Endothelial cell of umbilical vein (primary cell): ENCODE measurements at regions of chr9 and their contacts with region 1.

Region 1: DNA sequence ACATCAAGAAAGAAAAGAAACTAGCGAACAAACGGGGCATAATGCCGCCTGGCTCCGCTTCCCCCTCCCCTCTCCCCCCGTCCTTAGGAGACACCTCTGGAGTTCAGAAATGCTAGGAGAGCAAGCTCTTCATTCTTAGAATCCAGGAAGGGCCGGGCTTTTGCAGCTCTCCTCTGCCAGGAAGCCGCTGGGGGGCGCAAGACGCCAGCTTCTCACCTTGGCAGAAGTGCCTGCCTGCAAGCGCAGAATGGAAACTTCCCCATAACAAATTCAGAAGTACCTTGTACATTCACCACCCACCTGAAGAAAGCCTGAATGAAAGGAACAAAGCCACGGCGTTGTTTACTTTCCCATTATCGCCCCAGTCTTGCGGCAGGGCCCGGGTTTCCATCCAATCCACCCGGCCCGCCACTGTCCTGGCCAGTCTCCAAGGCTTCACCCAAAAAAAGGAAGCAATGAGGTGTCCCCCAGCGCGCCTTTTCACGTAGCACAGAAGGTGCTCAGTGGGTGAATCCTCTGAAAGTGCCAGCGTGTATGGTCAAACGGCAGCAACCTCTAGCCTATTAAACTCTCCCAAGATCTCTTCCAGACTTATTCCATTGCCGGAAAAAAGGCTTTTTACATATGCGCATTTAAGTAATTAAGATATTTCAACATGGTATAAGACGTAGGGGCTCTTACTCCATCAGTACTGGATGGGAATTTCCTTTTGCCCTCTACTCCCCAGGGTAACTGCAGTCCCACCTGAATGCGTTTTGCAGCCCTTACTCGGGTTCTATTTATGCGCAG is 1.6 kb upstream of the GADD45G start:
- DNase-seq: peak; percentile 77
- H3K4me3 ChIP-seq: no peak overlapping the region
- H3K27ac ChIP-seq: no peak overlapping the region
- H3K4me1 ChIP-seq: peaks cover 34% of the 10 kb centered on the region
- H3K27me3 ChIP-seq: peaks cover 7 to 14% of the 10 kb centered on the region in 2 experiments
- CTCF ChIP-seq: peak; percentile 85 to 93
- POLR2A ChIP-seq: no peak

Region 2: DNA sequence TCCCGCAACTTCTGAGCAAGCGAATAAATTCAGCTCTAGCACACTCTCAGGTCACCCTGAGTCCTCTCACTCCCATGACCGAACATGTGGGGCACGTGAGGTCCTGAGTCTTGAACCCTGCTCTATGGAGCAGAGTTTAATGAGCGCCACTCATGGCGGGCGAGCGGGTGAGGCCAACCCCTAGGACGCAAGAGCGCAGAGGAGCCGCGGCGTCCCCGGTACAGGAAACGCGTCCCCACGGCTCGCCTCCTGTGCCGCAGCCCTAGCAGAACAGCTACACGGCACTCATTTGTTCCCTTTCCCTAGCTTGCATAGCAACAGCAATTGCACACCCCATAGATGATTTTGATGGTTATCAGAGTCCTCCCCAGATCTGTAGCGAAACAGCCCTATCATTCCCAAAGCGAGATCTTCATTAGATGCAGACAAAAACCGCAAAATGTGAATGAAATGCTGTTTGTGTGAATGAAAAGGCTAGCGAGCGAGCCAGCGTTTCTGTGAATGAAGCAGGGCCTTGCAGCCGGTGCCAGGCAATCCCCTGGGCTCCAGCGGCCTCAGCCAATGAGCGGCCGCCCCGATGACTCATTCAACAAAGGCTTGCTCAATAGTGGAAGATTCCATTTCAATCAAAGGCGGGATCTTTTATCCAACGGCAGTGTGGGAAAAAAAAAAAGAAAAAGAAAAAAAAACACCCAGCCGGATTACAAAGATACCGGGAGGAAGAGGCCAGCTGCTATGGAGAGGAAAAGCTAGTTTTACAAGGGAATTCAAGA is 423.1 kb before region 1 on chr9:
- CTCF ChIA-PET with region 1: no interaction called
- POLR2A ChIA-PET with region 1: no interaction called
- dilution Hi-C with region 1: no loop called
- intact Hi-C with region 1: loop called (anchors 1 kb)
- DNase-seq: peak; percentile 97
- H3K4me3 ChIP-seq: peak overlapping the region; percentile 2 to 60 (median 34)
- H3K27ac ChIP-seq: peak overlapping the region; percentile 83
- H3K4me1 ChIP-seq: peaks cover 31% of the 10 kb centered on the region
- H3K27me3 ChIP-seq: peaks cover 13 to 20% of the 10 kb centered on the region in 2 experiments
- CTCF ChIP-seq: no peak
- POLR2A ChIP-seq: peak; percentile 85

Region 3: GRCh38 chr9:89542401-89543021 is 60.7 kb before region 1 on chr9:
- CTCF ChIA-PET with region 1: no interaction called
- POLR2A ChIA-PET with region 1: no interaction called
- dilution Hi-C with region 1: no loop called
- intact Hi-C with region 1: no loop called
- DNase-seq: no peak
- H3K4me3 ChIP-seq: no peak overlapping the region
- H3K27ac ChIP-seq: no peak overlapping the region
- H3K4me1 ChIP-seq: no peaks in the 10 kb centered on the region
- H3K27me3 ChIP-seq: no peaks in the 10 kb centered on the region
- CTCF ChIP-seq: no peak
- POLR2A ChIP-seq: no peak

Region 4: GRCh38 chr9:89623925-89624420 is 20.8 kb after region 1 on chr9:
- CTCF ChIA-PET with region 1: interaction called, 13 read pairs
- POLR2A ChIA-PET with region 1: no interaction called
- dilution Hi-C with region 1: no loop called
- intact Hi-C with region 1: no loop called
- DNase-seq: no peak
- H3K4me3 ChIP-seq: no peak overlapping the region
- H3K27ac ChIP-seq: no peak overlapping the region
- H3K4me1 ChIP-seq: no peaks in the 10 kb centered on the region
- H3K27me3 ChIP-seq: no peaks in the 10 kb centered on the region
- CTCF ChIP-seq: no peak
- POLR2A ChIP-seq: no peak

Region 5: GRCh38 chr9:89808076-89808755 is 205.0 kb after region 1 on chr9:
- CTCF ChIA-PET with region 1: interaction called, 5 read pairs
- POLR2A ChIA-PET with region 1: no interaction called
- dilution Hi-C with region 1: no loop called
- intact Hi-C with region 1: loop called (anchors 2 kb)
- DNase-seq: peak; percentile 49
- H3K4me3 ChIP-seq: no peak overlapping the region
- H3K27ac ChIP-seq: peak overlapping the region; percentile 64
- H3K4me1 ChIP-seq: peaks cover 41% of the 10 kb centered on the region
- H3K27me3 ChIP-seq: no peaks in the 10 kb centered on the region
- CTCF ChIP-seq: peak; percentile 11 to 19
- POLR2A ChIP-seq: no peak

Region 6: DNA sequence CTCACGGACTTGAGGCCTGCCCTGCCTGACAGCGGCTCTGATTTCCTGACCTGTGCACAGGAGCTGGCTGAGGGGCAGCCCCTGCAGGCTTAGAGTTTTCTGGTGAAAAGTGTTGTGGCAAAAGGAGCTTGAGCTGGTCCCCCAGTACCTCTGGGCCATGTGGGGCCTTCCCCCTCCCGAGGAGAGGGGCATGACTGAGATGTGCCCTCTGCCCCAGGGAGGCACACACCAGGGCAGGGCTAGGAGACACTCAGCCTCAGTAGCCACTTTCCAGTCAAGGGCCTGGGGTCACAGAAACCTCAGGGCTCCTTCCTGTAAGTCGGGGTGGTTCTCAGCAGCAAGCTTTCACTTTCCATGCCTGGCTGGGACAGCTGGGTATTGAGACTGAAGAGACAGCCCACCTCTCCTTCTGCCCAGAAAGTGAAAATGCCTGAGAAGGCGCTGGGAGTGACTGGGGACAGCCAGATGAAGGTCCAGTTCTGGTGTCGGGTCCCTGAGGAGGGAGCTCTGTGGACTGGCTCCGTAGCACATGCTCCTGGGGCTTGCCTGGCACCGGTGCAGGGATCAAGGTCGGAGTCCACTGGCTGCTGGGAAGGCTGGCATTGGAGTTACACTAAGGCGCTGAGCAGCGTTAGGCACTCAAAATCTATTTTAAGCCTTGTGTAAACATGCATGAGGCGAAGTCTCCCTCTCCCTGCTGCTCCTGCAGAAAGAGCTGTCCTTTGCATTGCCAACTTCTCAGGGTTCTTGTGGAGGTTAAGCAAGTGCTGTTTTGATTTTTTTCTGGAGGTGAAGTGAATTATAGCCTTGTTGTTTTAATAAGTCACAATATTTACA is 396.6 kb after region 1 on chr9:
- CTCF ChIA-PET with region 1: interaction called, 10 read pairs
- POLR2A ChIA-PET with region 1: no interaction called
- dilution Hi-C with region 1: no loop called
- intact Hi-C with region 1: loop called (anchors 1 kb)
- DNase-seq: no peak
- H3K4me3 ChIP-seq: no peak overlapping the region
- H3K27ac ChIP-seq: no peak overlapping the region
- H3K4me1 ChIP-seq: no peaks in the 10 kb centered on the region
- H3K27me3 ChIP-seq: no peaks in the 10 kb centered on the region
- CTCF ChIP-seq: no peak
- POLR2A ChIP-seq: no peak

Region 7: GRCh38 chr9:90102292-90102901 is 499.2 kb after region 1 on chr9:
- CTCF ChIA-PET with region 1: interaction called, 373 read pairs
- POLR2A ChIA-PET with region 1: interaction called, 3 read pairs
- dilution Hi-C with region 1: no loop called
- intact Hi-C with region 1: loop called (anchors 1 kb)
- DNase-seq: peak; percentile 79
- H3K4me3 ChIP-seq: no peak overlapping the region
- H3K27ac ChIP-seq: no peak overlapping the region
- H3K4me1 ChIP-seq: no peaks in the 10 kb centered on the region
- H3K27me3 ChIP-seq: no peaks in the 10 kb centered on the region
- CTCF ChIP-seq: peak; percentile 62 to 74
- POLR2A ChIP-seq: no peak